ENCODE measurements at regions of chr10 and their contacts with region 1.

Region 1: DNA sequence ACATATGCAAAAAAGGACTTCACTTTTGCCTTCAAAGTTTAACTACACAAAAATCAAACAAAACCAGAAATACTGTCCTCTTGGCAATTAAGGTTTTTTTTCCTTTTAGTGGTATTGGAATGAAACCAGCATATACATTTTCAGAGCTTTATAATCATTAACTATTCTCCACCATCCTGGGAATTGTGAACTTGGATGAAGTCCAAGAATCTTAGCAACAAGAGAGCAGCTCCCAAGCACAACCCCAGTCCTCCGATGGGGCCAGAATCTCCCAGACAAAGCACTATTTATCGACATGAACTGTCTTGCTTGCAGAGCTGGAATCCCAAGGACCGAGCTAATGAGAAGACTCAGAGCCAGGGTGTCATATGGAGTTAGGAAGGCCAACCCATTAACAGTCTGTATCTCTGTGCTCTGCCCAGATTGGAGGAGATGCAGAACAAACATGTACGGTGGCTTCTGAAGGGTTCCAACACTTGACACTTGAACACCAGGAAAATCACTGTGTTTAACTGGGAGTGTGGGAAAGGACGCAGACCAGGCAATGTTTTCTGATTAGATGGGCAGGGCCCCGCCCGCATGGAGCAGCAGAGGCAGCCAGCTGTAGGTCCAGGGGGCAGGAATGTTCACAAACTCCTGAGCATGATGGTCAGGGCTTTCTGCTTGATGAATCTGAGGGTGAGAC is 35.5 kb downstream of the PPP1R3C start:
- DNase-seq: peak; percentile 73

Region 2: GRCh38 chr10:91632671-91633550 is 35.6 kb after region 1 on chr10 and contains the start of gene PPP1R3C:
- in situ Hi-C with region 1: loop called (anchors 5 kb)
- DNase-seq: peak; percentile 98
- total RNA-seq, gene PPP1R3C: 3.5 and 4.2 TPM in 2 replicates